Pancreas (tissue), 10 donors: ENCODE measurements at regions of chr11 and their contacts with region 1.

Region 1: GRCh38 chr11:10134975-10135481 is 159.0 kb downstream of the SBF2 start:
- DNase-seq: no peak
- ATAC-seq: no peak
- H3K4me3 ChIP-seq: no peak overlapping the region
- H3K27ac ChIP-seq: no peak overlapping the region
- H3K4me1 ChIP-seq: no peaks in the 10 kb centered on the region
- H3K27me3 ChIP-seq: no peaks in the 10 kb centered on the region
- CTCF ChIP-seq: no peak

Region 2: GRCh38 chr11:9619753-9620365 is 515.2 kb before region 1 on chr11:
- intact Hi-C with region 1: loop called in 1 of 3 experiments (anchors 5 kb)
- DNase-seq: no peak
- ATAC-seq: no peak
- H3K4me3 ChIP-seq: no peak overlapping the region
- H3K27ac ChIP-seq: no peak overlapping the region
- H3K4me1 ChIP-seq: peaks cover 0 to 5% (median under 1%) of the 10 kb centered on the region in 3 donors
- H3K27me3 ChIP-seq: no peaks in the 10 kb centered on the region
- CTCF ChIP-seq: no peak